ENCODE measurements at regions of chr1 and their contacts with region 1.

Region 1: GRCh38 chr1:201895913-201896807 is 7.5 kb downstream of the SHISA4 start:
- DNase-seq: peak; percentile 92
- ATAC-seq: peak; percentile 88

Region 2: GRCh38 chr1:201955009-201955728 is 59.0 kb after region 1 on chr1 and contains the start of gene TIMM17A:
- intact Hi-C with region 1: loop called (anchors 5 kb)
- DNase-seq: peak; percentile 98
- ATAC-seq: peak; percentile 100
- total RNA-seq, gene TIMM17A: 83.6 TPM

Region 3: DNA sequence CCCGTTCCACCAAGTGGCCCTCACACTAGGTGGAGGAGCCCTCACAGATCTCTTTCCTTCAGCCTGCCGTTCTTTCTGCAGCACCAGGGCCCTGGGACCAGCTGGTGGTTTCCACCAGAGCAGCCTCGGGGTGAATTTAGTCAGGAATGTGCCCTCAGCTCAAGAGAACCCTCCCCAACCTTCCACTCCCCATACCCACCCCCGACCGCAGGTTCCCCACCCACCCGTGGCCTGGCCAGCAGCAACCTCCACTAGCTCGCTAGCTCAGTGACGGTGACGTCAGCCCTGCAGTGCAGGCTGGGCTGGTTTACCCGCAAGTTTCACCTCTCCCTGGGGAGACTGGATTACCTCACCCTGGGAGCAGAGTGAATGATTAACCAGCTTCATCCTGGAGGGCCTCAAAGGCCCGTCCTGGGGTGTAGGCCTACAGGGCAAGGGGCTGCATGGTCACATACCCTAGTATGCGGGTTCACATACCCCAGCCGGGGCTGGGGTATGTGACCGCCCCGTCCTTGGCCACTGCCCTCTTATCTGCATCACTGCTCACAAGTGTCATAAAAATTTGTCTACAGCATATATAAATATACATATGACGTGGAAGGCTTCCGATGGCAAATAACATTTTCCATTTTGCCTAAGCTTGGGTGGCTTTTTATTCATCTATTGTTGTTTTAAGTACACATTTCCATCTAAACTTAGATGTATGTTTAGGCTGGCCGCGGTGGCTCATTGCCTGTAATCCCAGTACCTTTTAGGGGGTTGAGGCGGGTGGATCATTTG is 138.7 kb after region 1 on chr1:
- intact Hi-C with region 1: no loop called
- DNase-seq: peak; percentile 88
- ATAC-seq: peak; percentile 95

Region 4: GRCh38 chr1:202122639-202123335 is 226.6 kb after region 1 on chr1 and contains the start of gene GPR37L1:
- intact Hi-C with region 1: loop called (anchors 5 kb)
- DNase-seq: no peak
- ATAC-seq: peak; percentile 65
- total RNA-seq, gene GPR37L1: 0.08 TPM

Measured in Right ventricle myocardium inferior (tissue), 1 donor.